CD14-positive monocyte (primary cell): ENCODE measurements at regions of chr14 and their contacts with region 1.

Region 1: DNA sequence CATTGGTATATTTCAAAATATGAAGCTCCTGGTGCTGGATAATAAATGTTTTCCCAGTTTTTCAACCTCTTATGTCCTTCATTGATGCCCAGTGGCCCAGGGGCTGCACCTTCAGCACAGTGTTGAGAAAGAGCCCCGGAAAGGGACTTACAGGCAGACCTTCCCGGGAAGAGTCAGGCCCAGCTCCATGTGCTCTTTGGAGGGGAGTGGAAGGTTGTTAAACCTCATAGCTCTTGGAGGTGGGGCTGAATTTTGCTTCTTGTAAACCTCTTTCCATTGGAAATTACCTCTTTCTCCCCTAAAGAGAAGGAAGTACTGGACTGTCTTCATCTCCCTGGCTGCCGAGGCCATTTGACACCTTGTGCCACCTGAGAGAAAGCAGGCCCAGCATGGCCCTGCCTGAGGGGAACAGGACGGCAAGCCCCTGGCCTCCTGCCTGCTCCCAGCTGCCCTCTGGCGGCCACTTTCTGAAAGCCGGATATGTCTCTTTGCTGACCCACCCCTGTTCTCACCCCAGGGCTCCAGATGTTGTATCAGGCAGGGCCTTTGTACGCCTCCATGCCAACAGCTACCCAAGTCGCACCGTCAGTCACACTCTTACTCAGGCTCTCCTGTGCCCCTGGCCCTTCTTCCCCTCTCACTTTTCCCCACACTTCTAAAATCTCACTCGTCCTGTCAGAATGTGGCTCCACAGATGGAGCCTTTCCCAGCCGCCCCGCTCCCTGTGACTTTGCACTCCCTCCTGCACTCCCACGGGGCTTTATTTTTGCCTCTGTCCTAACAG is 43.0 kb downstream of the EVL start:
- DNase-seq: peak; percentile 63 to 73 (median 66)
- H3K4me3 ChIP-seq: no peak overlapping the region
- H3K4me3 Mint-ChIP-seq: no peak overlapping the region
- H3K27ac ChIP-seq: peak overlapping the region in 1 of 2 donors; percentile 69
- H3K27ac Mint-ChIP-seq: peak overlapping the region in 5 of 7 donors; percentile 2 to 91 (median 82)
- H3K4me1 ChIP-seq: peaks cover 27 to 30% of the 10 kb centered on the region in 2 donors
- H3K4me1 Mint-ChIP-seq: peaks cover 40% of the 10 kb centered on the region
- H3K27me3 ChIP-seq: no peaks in the 10 kb centered on the region
- H3K27me3 Mint-ChIP-seq: peaks cover 0 to 2% (median 1%) of the 10 kb centered on the region in 3 donors
- CTCF ChIP-seq: peak; percentile 93

Region 2: GRCh38 chr14:99982537-99983250 is 125.5 kb before region 1 on chr14:
- intact Hi-C with region 1: loop called (anchors 2 to 5 kb)
- DNase-seq: peak; percentile 50 to 61 (median 57)
- H3K4me3 ChIP-seq: no peak overlapping the region
- H3K4me3 Mint-ChIP-seq: no peak overlapping the region
- H3K27ac ChIP-seq: no peak overlapping the region
- H3K27ac Mint-ChIP-seq: no peak overlapping the region
- H3K4me1 ChIP-seq: peaks cover 0 to 7% of the 10 kb centered on the region in 2 donors
- H3K4me1 Mint-ChIP-seq: peaks cover 13% of the 10 kb centered on the region
- H3K27me3 ChIP-seq: no peaks in the 10 kb centered on the region
- H3K27me3 Mint-ChIP-seq: peaks cover 0 to 2% (median 1%) of the 10 kb centered on the region in 3 donors
- CTCF ChIP-seq: peak; percentile 95

Region 3: GRCh38 chr14:99996951-99997571 is 111.2 kb before region 1 on chr14:
- intact Hi-C with region 1: no loop called
- DNase-seq: no peak
- H3K4me3 ChIP-seq: no peak overlapping the region
- H3K4me3 Mint-ChIP-seq: no peak overlapping the region
- H3K27ac ChIP-seq: no peak overlapping the region
- H3K27ac Mint-ChIP-seq: no peak overlapping the region
- H3K4me1 ChIP-seq: no peaks in the 10 kb centered on the region
- H3K4me1 Mint-ChIP-seq: peaks cover 4% of the 10 kb centered on the region
- H3K27me3 ChIP-seq: no peaks in the 10 kb centered on the region
- H3K27me3 Mint-ChIP-seq: peaks cover 0 to 2% (median 2%) of the 10 kb centered on the region in 3 donors
- CTCF ChIP-seq: no peak

Region 4: GRCh38 chr14:100067971-100068959 is 40.0 kb before region 1 on chr14:
- intact Hi-C with region 1: loop called (anchors 5 kb)
- DNase-seq: peak; percentile 84 to 91 (median 90)
- H3K4me3 ChIP-seq: peak overlapping the region; percentile 23 to 68 (median 23)
- H3K4me3 Mint-ChIP-seq: peak overlapping the region; percentile 78 to 97
- H3K27ac ChIP-seq: peak overlapping the region; percentile 90 to 95
- H3K27ac Mint-ChIP-seq: peak overlapping the region; percentile 90 to 99 (median 98)
- H3K4me1 ChIP-seq: peaks cover 66 to 78% of the 10 kb centered on the region in 2 donors
- H3K4me1 Mint-ChIP-seq: peaks cover 72% of the 10 kb centered on the region
- H3K27me3 ChIP-seq: no peaks in the 10 kb centered on the region
- H3K27me3 Mint-ChIP-seq: peaks cover 0 to under 1% (median 0%) of the 10 kb centered on the region in 3 donors
- CTCF ChIP-seq: no peak